Head of caudate nucleus (tissue), 42 donors: ENCODE measurements at regions of chr9 and their contacts with region 1.

Region 1: GRCh38 chr9:128881901-128882681 is at the starts of genes KYAT1 and LRRC8A:
- DNase-seq: peak; percentile 95 to 99 (median 98)

Region 2: GRCh38 chr9:128921881-128922763 is 40.0 kb after region 1 on chr9:
- intact Hi-C with region 1: loop called (anchors 5 kb)
- DNase-seq: peak in 6 of 42 donors; percentile 19 to 50 (median 31)

Region 3: GRCh38 chr9:128947422-128948301 is 65.6 kb after region 1 on chr9 and contains the starts of genes DOLK and NUP188:
- intact Hi-C with region 1: loop called (anchors 5 kb)
- DNase-seq: peak; percentile 90 to 100 (median 98)

Region 4: GRCh38 chr9:128992995-128993394 is 110.9 kb after region 1 on chr9:
- intact Hi-C with region 1: no loop called
- DNase-seq: peak; percentile 33 to 89 (median 74)